ENCODE measurements at regions of chr11 and their contacts with region 1.

Region 1: GRCh38 chr11:30586251-30587144 is at the start of gene MPPED2:
- DNase-seq: peak; percentile 53 to 75 (median 61)
- ATAC-seq: peak; percentile 40 to 91 (median 82)
- H3K4me3 ChIP-seq: peak within 1 kb of the TSS; percentile 64 to 97 (median 88)
- H3K27ac ChIP-seq: peak within 1 kb of the TSS; percentile 83 to 95 (median 88)
- H3K4me1 ChIP-seq: peaks cover 0 to 22% (median 4%) of the 10 kb centered on the region in 12 donors
- H3K27me3 ChIP-seq: peaks cover 0 to 34% (median 0%) of the 10 kb centered on the region in 9 donors
- CTCF ChIP-seq: peak; percentile 25 to 67 (median 52)
- POLR2A ChIP-seq: no peak
- total RNA-seq, gene MPPED2: 4.6 to 14.3 (median 9.7) TPM

Region 2: DNA sequence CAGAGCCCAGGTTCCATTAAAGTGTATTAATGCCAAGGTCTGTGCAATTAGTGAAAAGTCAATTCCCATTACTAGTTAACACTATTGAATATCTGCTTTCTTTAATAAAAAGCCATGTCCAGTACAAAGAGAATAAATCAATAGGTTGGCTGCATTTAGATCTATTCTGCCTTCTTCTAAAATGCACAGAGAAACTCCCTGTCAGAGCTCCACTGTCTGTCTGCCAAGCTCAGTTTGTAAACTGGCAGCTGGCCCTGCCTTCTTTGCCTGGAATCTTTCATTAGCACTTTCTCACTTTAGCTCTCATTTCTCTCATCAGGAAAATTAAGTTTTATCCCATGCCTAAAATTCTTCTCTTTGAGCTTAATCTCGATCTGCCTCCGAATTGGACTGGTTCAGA is 228.0 kb before region 1 on chr11:
- intact Hi-C with region 1: loop called in 6 of 10 experiments (anchors 5 to 10 kb)
- DNase-seq: peak in 2 of 5 donors; percentile 19 to 33
- ATAC-seq: peak; percentile 27 to 60 (median 56)
- H3K4me3 ChIP-seq: no peak overlapping the region
- H3K27ac ChIP-seq: peak overlapping the region in 1 of 12 donors; percentile 2
- H3K4me1 ChIP-seq: peaks cover 0 to 11% (median 0%) of the 10 kb centered on the region in 12 donors
- H3K27me3 ChIP-seq: no peaks in the 10 kb centered on the region
- CTCF ChIP-seq: no peak
- POLR2A ChIP-seq: no peak

Region 3: DNA sequence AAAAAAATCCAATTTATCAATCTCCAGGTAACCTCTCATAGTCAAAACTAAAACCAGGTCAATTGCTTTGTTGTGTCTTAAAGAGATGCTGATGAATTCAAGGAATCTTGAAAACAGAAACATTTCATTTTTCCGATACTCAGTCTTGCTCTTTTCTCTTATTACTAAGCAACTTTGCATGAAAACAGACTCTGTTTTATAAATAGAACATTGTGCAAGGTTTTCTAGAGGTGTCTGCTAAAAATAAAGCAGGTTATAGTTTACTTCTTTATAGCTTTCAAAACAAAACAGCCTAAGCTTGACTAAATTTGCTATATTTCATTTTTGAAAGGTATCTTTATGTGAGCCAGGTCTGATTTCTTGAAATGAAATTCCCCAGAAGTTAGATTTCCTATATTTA is 154.3 kb before region 1 on chr11:
- intact Hi-C with region 1: loop called in 2 of 10 experiments (anchors 10 kb)
- DNase-seq: no peak
- ATAC-seq: peak in 2 of 4 donors; percentile 41 to 53
- H3K4me3 ChIP-seq: no peak overlapping the region
- H3K27ac ChIP-seq: peak overlapping the region in 9 of 12 donors; percentile 1 to 49 (median 24)
- H3K4me1 ChIP-seq: peaks cover 0 to 36% (median 18%) of the 10 kb centered on the region in 12 donors
- H3K27me3 ChIP-seq: no peaks in the 10 kb centered on the region
- CTCF ChIP-seq: no peak
- POLR2A ChIP-seq: no peak

Region 4: DNA sequence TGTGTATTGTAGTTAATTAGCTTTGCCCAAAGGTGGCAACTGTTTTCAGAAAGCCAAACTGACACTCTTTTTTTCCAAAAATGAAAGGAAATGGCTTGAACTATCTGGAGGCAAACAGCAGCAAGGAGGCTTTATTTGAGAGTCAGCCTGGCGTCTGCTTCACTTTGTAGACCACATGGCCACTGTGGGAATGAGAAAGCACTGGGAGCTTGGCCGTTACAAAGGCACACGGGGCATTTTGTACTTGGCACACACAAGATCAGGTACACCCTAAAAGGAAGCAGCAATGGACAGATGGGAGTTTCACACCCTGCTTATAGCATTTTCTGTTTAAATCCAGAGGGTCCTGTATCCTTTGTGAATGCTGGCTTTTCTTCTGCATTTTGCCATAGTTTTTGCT is 126.7 kb before region 1 on chr11:
- intact Hi-C with region 1: loop called in 2 of 10 experiments (anchors 10 kb)
- DNase-seq: no peak
- ATAC-seq: peak in 1 of 4 donors; percentile 57
- H3K4me3 ChIP-seq: no peak overlapping the region
- H3K27ac ChIP-seq: no peak overlapping the region
- H3K4me1 ChIP-seq: peaks cover 0 to 50% (median 27%) of the 10 kb centered on the region in 12 donors
- H3K27me3 ChIP-seq: no peaks in the 10 kb centered on the region
- CTCF ChIP-seq: no peak
- POLR2A ChIP-seq: no peak

Region 5: DNA sequence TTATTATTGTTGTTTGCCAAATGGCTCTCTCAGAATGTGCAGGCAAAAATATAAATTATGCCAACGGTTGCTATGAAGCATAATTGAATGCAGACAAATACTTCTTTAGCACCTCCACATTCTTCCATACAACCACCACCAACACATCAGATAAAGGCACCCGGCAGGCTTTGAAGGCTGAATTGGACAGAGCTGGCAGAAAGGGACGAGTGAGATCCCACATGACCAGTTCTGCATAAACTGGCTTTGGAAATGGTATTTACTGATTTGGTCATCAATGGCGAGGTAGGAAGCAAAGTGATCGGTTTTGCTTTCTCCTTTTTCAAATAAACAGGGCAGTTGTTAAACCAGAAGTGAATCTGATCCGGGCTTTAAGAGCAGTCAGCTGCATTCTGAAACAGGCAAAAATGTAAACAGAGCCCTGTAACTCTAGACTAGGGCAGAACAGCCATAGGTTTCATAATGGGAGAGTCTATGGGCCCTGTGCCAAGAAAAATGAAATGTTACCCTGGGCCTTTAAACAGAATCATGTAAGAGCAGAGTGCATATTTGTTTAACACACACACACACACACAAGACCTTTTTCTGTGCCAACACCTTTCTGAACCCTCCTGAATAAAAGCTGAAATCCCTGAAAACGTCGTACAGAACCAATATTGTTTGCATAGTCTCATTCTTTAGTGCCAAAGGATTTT is 98.0 kb before region 1 on chr11:
- intact Hi-C with region 1: loop called in 3 of 10 experiments (anchors 5 to 10 kb)
- DNase-seq: no peak
- ATAC-seq: peak in 2 of 4 donors; percentile 50 to 59
- H3K4me3 ChIP-seq: no peak overlapping the region
- H3K27ac ChIP-seq: peak overlapping the region in 2 of 12 donors; percentile 39 to 40
- H3K4me1 ChIP-seq: peaks cover 0 to 47% (median 23%) of the 10 kb centered on the region in 12 donors
- H3K27me3 ChIP-seq: no peaks in the 10 kb centered on the region
- CTCF ChIP-seq: no peak
- POLR2A ChIP-seq: no peak

Region 6: GRCh38 chr11:30522536-30523243 is 63.8 kb before region 1 on chr11:
- intact Hi-C with region 1: no loop called
- DNase-seq: no peak
- ATAC-seq: peak in 1 of 4 donors; percentile 29
- H3K4me3 ChIP-seq: no peak overlapping the region
- H3K27ac ChIP-seq: no peak overlapping the region
- H3K4me1 ChIP-seq: peaks cover 0 to 16% (median 0%) of the 10 kb centered on the region in 12 donors
- H3K27me3 ChIP-seq: no peaks in the 10 kb centered on the region
- CTCF ChIP-seq: no peak
- POLR2A ChIP-seq: no peak

Region 7: GRCh38 chr11:30801357-30801756 is 214.9 kb after region 1 on chr11:
- intact Hi-C with region 1: no loop called
- DNase-seq: no peak
- ATAC-seq: no peak
- H3K4me3 ChIP-seq: no peak overlapping the region
- H3K27ac ChIP-seq: no peak overlapping the region
- H3K4me1 ChIP-seq: no peaks in the 10 kb centered on the region
- H3K27me3 ChIP-seq: no peaks in the 10 kb centered on the region
- CTCF ChIP-seq: no peak
- POLR2A ChIP-seq: no peak

Region 8: DNA sequence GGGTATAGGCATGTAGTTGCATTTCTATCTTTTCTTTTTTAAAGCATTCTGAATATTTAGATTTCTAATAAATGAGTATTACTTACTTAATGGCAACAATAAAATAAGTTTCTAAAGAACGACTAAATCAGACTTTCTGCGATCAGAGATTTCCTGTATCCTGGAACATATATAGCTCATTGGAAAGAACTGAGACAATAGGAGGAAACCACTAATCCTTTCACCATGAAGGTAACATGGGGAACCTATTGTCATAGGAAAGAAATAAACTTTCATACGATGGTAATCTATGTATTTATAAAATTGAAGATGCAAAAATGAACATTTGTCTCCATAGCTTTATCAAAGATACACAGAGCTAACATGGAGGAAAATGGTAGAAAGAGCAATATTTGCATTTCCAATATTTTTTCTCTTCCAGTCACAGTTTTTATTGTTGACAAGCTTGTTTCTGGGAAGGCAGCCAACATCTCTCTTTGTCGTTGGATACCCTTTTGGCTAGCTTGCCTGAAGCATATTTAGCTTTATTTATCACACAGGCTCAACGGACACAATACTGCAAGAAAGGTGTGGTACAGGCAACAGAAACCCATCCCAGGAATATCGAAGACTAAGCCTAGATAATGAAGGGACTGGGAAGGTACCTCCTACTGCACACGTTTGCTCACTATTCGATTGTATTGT is 293.0 kb after region 1 on chr11:
- intact Hi-C with region 1: loop called in 1 of 10 experiments (anchors 10 kb)
- DNase-seq: peak in 4 of 5 donors; percentile 37 to 75 (median 50)
- ATAC-seq: peak; percentile 81 to 94 (median 86)
- H3K4me3 ChIP-seq: peak overlapping the region in 1 of 12 donors; percentile 13
- H3K27ac ChIP-seq: peak overlapping the region in 8 of 12 donors; percentile 31 to 70 (median 63)
- H3K4me1 ChIP-seq: peaks cover 0 to 47% (median 25%) of the 10 kb centered on the region in 12 donors
- H3K27me3 ChIP-seq: no peaks in the 10 kb centered on the region
- CTCF ChIP-seq: no peak
- POLR2A ChIP-seq: no peak

Measured in heart left ventricle (tissue), 16 donors.